Cardiac septum (tissue), 1 donor: ENCODE measurements at regions of chr22 and their contacts with region 1.

Region 1: GRCh38 chr22:37887610-37888378 is 18.3 kb upstream of the MICALL1 start:
- DNase-seq: no peak

Region 2: GRCh38 chr22:37933711-37934376 is 46.0 kb after region 1 on chr22:
- intact Hi-C with region 1: loop called (anchors 5 kb)
- DNase-seq: peak; percentile 95

Region 3: DNA sequence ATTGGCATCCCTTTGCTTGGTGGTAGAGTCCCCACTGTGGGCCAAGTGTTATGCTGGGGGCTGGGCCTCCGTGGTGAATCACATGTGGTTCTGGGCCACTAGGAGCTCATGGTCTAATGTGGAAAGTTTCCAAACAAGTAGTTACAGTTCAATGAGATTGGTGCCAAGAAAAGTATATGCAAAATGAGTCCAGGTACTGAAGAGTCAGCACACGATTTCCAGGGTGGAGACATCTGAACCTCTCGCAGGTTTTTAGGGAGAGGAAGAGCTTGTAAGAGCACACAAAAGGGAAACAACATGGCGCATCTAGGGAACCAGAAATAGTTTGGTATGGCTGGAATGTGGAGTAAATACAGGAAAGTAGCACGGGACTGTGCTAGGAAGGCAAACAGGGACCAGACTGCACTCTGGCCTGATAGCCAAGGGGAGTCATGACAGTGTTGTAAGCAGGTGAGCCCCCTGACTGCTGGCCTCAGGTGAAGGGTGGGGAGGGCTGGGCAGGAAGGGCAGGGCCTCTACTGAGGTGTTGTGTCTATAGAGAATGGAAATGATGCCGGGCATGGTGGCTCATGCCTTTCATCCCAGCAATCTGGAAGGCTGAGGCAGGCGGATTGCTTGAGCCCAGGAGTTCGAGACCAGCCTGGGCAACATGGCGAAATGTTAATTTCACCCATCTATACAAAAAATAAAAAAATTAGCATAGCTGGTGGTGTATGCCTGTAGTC is 78.3 kb after region 1 on chr22:
- intact Hi-C with region 1: loop called (anchors 5 kb)
- DNase-seq: no peak